Endothelial cell of umbilical vein (primary cell): ENCODE measurements at regions of chr3 and their contacts with region 1.

Region 1: GRCh38 chr3:33787328-33788009 is 11.0 kb upstream of the PDCD6IP start:
- DNase-seq: peak; percentile 71
- H3K4me3 ChIP-seq: peak overlapping the region; percentile 7 to 17 (median 8)
- H3K27ac ChIP-seq: no peak overlapping the region
- H3K4me1 ChIP-seq: peaks cover 4% of the 10 kb centered on the region
- H3K27me3 ChIP-seq: no peaks in the 10 kb centered on the region
- CTCF ChIP-seq: peak; percentile 73 to 74
- POLR2A ChIP-seq: no peak

Region 2: DNA sequence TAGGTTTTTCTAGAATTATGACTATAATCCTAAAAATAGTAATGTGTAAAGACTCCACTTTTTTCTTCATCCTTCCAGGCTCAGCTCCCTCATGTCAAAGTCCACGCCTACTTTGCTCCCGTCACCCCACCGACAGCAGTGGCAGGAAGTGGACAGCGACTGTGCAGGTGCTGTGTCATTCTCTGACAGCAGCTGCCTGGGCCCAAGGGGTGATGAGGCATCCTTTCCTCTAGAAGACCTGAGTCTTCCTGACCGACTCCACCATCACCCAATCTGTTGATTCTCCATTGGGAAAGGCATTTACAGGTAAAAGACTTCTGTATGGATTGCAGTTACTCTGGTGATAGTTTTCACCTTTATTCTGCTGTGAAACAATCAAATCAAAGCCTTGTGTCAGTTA is 402.0 kb before region 1 on chr3:
- CTCF ChIA-PET with region 1: interaction called, 5 read pairs
- POLR2A ChIA-PET with region 1: no interaction called
- dilution Hi-C with region 1: no loop called
- intact Hi-C with region 1: loop called (anchors 1 kb)
- DNase-seq: no peak
- H3K4me3 ChIP-seq: no peak overlapping the region
- H3K27ac ChIP-seq: no peak overlapping the region
- H3K4me1 ChIP-seq: peaks cover 21% of the 10 kb centered on the region
- H3K27me3 ChIP-seq: no peaks in the 10 kb centered on the region
- CTCF ChIP-seq: no peak
- POLR2A ChIP-seq: no peak

Region 3: GRCh38 chr3:33440323-33441232 is 346.9 kb before region 1 on chr3 and contains the start of gene UBP1:
- CTCF ChIA-PET with region 1: interaction called, 10 read pairs
- POLR2A ChIA-PET with region 1: no interaction called
- dilution Hi-C with region 1: no loop called
- intact Hi-C with region 1: loop called (anchors 2 kb)
- DNase-seq: peak; percentile 99
- H3K4me3 ChIP-seq: peak within 1 kb of the TSS; percentile 98 to 99 (median 98)
- H3K27ac ChIP-seq: peak within 1 kb of the TSS; percentile 86
- H3K4me1 ChIP-seq: peaks cover 23% of the 10 kb centered on the region
- H3K27me3 ChIP-seq: no peaks in the 10 kb centered on the region
- CTCF ChIP-seq: peak in 1 of 2 donors; percentile 16
- POLR2A ChIP-seq: peak; percentile 95
- total RNA-seq, gene UBP1: 89.7 and 90.5 TPM in 2 replicates

Region 4: GRCh38 chr3:33645060-33645647 is 142.3 kb before region 1 on chr3:
- CTCF ChIA-PET with region 1: interaction called, 24 read pairs
- POLR2A ChIA-PET with region 1: no interaction called
- dilution Hi-C with region 1: no loop called
- intact Hi-C with region 1: no loop called
- DNase-seq: peak; percentile 41
- H3K4me3 ChIP-seq: peak overlapping the region in 2 of 3 experiments; percentile 19 to 36
- H3K27ac ChIP-seq: no peak overlapping the region
- H3K4me1 ChIP-seq: no peaks in the 10 kb centered on the region
- H3K27me3 ChIP-seq: no peaks in the 10 kb centered on the region
- CTCF ChIP-seq: no peak
- POLR2A ChIP-seq: no peak

Region 5: GRCh38 chr3:33773637-33774036 is 13.8 kb before region 1 on chr3:
- CTCF ChIA-PET with region 1: interaction called, 112 read pairs
- POLR2A ChIA-PET with region 1: no interaction called
- dilution Hi-C with region 1: no loop called
- intact Hi-C with region 1: no loop called
- DNase-seq: no peak
- H3K4me3 ChIP-seq: no peak overlapping the region
- H3K27ac ChIP-seq: no peak overlapping the region
- H3K4me1 ChIP-seq: no peaks in the 10 kb centered on the region
- H3K27me3 ChIP-seq: no peaks in the 10 kb centered on the region
- CTCF ChIP-seq: no peak
- POLR2A ChIP-seq: no peak

Region 6: GRCh38 chr3:33833408-33834095 is 46.1 kb after region 1 on chr3:
- CTCF ChIA-PET with region 1: no interaction called
- POLR2A ChIA-PET with region 1: no interaction called
- dilution Hi-C with region 1: no loop called
- intact Hi-C with region 1: no loop called
- DNase-seq: no peak
- H3K4me3 ChIP-seq: no peak overlapping the region
- H3K27ac ChIP-seq: no peak overlapping the region
- H3K4me1 ChIP-seq: no peaks in the 10 kb centered on the region
- H3K27me3 ChIP-seq: no peaks in the 10 kb centered on the region
- CTCF ChIP-seq: no peak
- POLR2A ChIP-seq: no peak

Region 7: DNA sequence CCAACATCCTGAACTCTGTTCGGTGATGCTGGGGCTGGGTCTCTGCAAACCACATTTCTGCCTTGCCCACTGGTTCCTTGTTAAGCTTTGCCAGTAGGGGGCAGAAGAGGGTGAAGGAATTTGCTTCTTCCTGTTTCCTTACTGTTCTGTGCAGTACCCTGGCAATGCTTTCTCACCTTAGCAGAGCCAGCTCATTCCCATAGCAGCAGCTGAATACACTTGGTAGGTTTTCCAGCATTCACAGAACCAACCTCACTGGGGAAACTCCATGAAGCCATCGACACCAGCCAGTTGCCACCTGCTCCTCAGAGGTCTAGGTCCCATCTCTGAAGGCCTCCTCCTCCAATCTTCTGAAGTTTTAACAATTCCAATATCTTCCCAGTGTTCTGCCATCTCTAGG is 319.4 kb after region 1 on chr3:
- CTCF ChIA-PET with region 1: no interaction called
- POLR2A ChIA-PET with region 1: no interaction called
- dilution Hi-C with region 1: no loop called
- intact Hi-C with region 1: no loop called
- DNase-seq: peak; percentile 79
- H3K4me3 ChIP-seq: no peak overlapping the region
- H3K27ac ChIP-seq: no peak overlapping the region
- H3K4me1 ChIP-seq: no peaks in the 10 kb centered on the region
- H3K27me3 ChIP-seq: peaks cover 6 to 9% of the 10 kb centered on the region in 2 experiments
- CTCF ChIP-seq: peak; percentile 78 to 86
- POLR2A ChIP-seq: no peak

Region 8: GRCh38 chr3:35224565-35225280 is 1437.3 kb after region 1 on chr3:
- CTCF ChIA-PET with region 1: no interaction called
- POLR2A ChIA-PET with region 1: no interaction called
- dilution Hi-C with region 1: no loop called
- intact Hi-C with region 1: no loop called
- DNase-seq: no peak
- H3K4me3 ChIP-seq: no peak overlapping the region
- H3K27ac ChIP-seq: no peak overlapping the region
- H3K4me1 ChIP-seq: no peaks in the 10 kb centered on the region
- H3K27me3 ChIP-seq: no peaks in the 10 kb centered on the region
- CTCF ChIP-seq: no peak
- POLR2A ChIP-seq: no peak